PC-3 (cell line): ENCODE measurements at regions of chr6 and their contacts with region 1.

Region 1: GRCh38 chr6:128520436-128521281 is at the start of gene PTPRK:
- DNase-seq: peak; percentile 89
- ATAC-seq: peak; percentile 74
- H3K4me3 ChIP-seq: peak within 1 kb of the TSS; percentile 94
- H3K27ac ChIP-seq: peak within 1 kb of the TSS; percentile 96
- H3K4me1 ChIP-seq: peaks cover 36% of the 10 kb centered on the region
- H3K27me3 ChIP-seq: no peaks in the 10 kb centered on the region
- CTCF ChIP-seq: 0 out of 2 replicates have a peak, but pooled peaks have one; percentile 25
- total RNA-seq, gene PTPRK: 53.8 and 64.7 TPM in 2 replicates

Region 2: GRCh38 chr6:127737009-127737486 is 783.6 kb before region 1 on chr6:
- CTCF ChIA-PET with region 1: no interaction called
- POLR2A ChIA-PET with region 1: no interaction called
- intact Hi-C with region 1: loop called (anchors 2 kb)
- DNase-seq: peak; percentile 71
- ATAC-seq: peak; percentile 87
- H3K4me3 ChIP-seq: no peak overlapping the region
- H3K27ac ChIP-seq: no peak overlapping the region
- H3K4me1 ChIP-seq: no peaks in the 10 kb centered on the region
- H3K27me3 ChIP-seq: peaks cover 14% of the 10 kb centered on the region; the same call in 1 of the 2 replicates
- CTCF ChIP-seq: peak; percentile 75

Region 3: GRCh38 chr6:128368213-128368944 is 152.3 kb before region 1 on chr6:
- CTCF ChIA-PET with region 1: no interaction called
- POLR2A ChIA-PET with region 1: no interaction called
- intact Hi-C with region 1: loop called (anchors 5 kb)
- DNase-seq: peak; percentile 81
- ATAC-seq: peak; percentile 75
- H3K4me3 ChIP-seq: peak overlapping the region; percentile 49
- H3K27ac ChIP-seq: peak overlapping the region; percentile 91
- H3K4me1 ChIP-seq: peaks cover 59% of the 10 kb centered on the region
- H3K27me3 ChIP-seq: no peaks in the 10 kb centered on the region
- CTCF ChIP-seq: no peak

Region 4: DNA sequence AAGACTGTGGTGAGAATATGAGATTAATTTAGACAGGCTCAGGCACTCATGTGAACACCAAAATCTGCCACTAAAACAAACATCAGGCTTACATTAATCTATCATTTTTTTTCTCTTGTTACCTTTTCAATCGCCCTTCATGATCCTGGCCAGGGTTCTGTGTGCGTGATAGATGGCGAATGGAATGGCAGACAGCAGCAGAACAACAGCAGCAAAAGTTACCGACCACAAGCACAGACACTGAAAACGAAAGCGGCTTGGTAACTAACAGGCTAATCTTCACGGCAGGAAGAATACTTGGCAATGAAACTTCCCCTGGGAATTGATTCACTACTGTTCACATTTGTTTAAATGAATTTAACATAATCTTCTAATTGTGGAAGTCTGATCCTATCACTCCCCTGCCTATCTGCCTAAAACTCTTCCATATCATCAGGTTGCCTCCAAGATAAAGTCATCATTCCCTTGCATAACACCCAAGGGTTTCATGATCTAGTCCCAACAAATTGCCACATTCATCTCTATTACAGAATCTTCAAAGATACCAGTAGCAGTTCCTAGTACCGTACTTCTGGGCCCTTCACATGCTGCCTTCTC is 29.0 kb before region 1 on chr6:
- CTCF ChIA-PET with region 1: no interaction called
- POLR2A ChIA-PET with region 1: no interaction called
- intact Hi-C with region 1: loop called (anchors 1 kb)
- DNase-seq: peak; percentile 37
- ATAC-seq: peak; percentile 36
- H3K4me3 ChIP-seq: peak overlapping the region; percentile 64
- H3K27ac ChIP-seq: peak overlapping the region; percentile 94
- H3K4me1 ChIP-seq: peaks cover 47% of the 10 kb centered on the region
- H3K27me3 ChIP-seq: no peaks in the 10 kb centered on the region
- CTCF ChIP-seq: no peak

Region 5: DNA sequence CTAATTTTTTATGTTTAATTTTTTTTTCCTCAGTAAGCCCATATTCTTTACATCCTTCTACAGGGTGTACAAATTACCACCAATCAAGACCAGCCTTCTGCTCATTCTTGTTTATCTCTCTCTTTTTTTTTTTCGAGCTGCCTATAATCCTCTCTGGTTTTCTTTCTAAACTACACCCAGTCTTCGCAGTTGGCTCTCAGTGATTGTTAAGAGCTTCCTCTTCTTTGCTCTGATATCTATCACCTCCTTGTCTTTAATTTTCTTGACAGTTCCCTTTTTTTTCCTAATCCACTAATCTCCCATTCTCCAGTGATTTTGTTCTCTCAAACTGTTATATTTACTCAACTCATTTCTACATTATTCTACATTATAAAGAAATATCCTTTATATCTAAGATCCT is 38.3 kb after region 1 on chr6:
- CTCF ChIA-PET with region 1: no interaction called
- POLR2A ChIA-PET with region 1: no interaction called
- intact Hi-C with region 1: no loop called
- DNase-seq: no peak
- ATAC-seq: no peak
- H3K4me3 ChIP-seq: no peak overlapping the region
- H3K27ac ChIP-seq: no peak overlapping the region
- H3K4me1 ChIP-seq: no peaks in the 10 kb centered on the region
- H3K27me3 ChIP-seq: no peaks in the 10 kb centered on the region
- CTCF ChIP-seq: no peak

Region 6: DNA sequence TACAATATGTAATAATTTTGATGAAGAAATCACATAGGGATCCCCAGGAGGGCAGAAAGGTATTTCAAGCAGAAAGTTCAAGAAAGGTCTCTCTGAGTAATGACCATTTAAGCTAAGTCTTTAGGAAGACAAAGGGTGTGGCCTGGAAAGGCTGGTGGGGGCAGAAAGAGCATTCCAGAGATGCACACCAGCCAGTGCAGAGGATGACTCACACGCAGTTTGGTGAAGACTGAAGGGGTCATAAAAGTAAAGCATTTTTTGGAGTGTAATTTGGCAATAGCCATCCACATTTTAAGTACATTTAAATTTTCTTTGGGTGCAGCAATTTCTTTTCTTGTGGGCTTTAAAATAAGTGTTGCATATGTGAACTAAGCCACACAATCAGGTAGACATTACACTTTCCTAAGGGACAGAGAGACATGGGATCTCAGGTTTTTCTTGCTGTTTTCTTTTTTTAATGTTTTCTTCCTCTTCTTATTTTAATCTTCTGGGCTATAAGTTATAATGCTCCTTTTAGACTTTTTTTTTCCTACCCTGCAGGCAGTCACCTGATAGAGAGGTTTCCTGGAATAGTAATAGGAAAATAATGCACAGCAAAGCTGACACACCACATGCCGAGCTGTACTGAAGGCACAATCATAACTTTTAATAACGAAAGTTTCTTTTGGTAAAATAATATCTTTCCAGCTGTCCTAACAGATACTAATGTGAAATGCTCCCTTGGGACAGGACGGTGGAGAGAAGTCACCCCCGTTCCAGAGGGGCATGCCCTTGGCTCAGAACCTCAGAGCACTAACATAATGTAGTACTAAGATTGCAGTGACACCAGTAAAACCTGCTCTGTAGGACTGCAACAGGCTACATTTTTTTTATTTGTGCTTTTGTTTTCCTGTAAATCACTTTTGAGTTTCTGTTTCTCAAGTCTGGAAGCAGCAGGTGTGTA is 49.3 kb after region 1 on chr6:
- CTCF ChIA-PET with region 1: no interaction called
- POLR2A ChIA-PET with region 1: no interaction called
- intact Hi-C with region 1: loop called (anchors 1 kb)
- DNase-seq: peak; percentile 92
- ATAC-seq: peak; percentile 76
- H3K4me3 ChIP-seq: peak overlapping the region; percentile 62
- H3K27ac ChIP-seq: peak overlapping the region; percentile 93
- H3K4me1 ChIP-seq: peaks cover 62% of the 10 kb centered on the region
- H3K27me3 ChIP-seq: no peaks in the 10 kb centered on the region
- CTCF ChIP-seq: no peak

Region 7: GRCh38 chr6:128655978-128656498 is 135.4 kb after region 1 on chr6:
- CTCF ChIA-PET with region 1: no interaction called
- POLR2A ChIA-PET with region 1: no interaction called
- intact Hi-C with region 1: loop called (anchors 2 kb)
- DNase-seq: peak; percentile 89
- ATAC-seq: peak; percentile 80
- H3K4me3 ChIP-seq: no peak overlapping the region; the same call in 1 of the 2 replicates
- H3K27ac ChIP-seq: peak overlapping the region; percentile 94
- H3K4me1 ChIP-seq: peaks cover 37% of the 10 kb centered on the region
- H3K27me3 ChIP-seq: no peaks in the 10 kb centered on the region
- CTCF ChIP-seq: no peak

Region 8: GRCh38 chr6:128731249-128732165 is 210.8 kb after region 1 on chr6:
- CTCF ChIA-PET with region 1: interaction called, 4 read pairs
- POLR2A ChIA-PET with region 1: no interaction called
- intact Hi-C with region 1: loop called (anchors 2 kb)
- DNase-seq: peak; percentile 65
- ATAC-seq: peak; percentile 74
- H3K4me3 ChIP-seq: no peak overlapping the region
- H3K27ac ChIP-seq: no peak overlapping the region
- H3K4me1 ChIP-seq: no peaks in the 10 kb centered on the region
- H3K27me3 ChIP-seq: no peaks in the 10 kb centered on the region
- CTCF ChIP-seq: peak; percentile 77

Region 9: DNA sequence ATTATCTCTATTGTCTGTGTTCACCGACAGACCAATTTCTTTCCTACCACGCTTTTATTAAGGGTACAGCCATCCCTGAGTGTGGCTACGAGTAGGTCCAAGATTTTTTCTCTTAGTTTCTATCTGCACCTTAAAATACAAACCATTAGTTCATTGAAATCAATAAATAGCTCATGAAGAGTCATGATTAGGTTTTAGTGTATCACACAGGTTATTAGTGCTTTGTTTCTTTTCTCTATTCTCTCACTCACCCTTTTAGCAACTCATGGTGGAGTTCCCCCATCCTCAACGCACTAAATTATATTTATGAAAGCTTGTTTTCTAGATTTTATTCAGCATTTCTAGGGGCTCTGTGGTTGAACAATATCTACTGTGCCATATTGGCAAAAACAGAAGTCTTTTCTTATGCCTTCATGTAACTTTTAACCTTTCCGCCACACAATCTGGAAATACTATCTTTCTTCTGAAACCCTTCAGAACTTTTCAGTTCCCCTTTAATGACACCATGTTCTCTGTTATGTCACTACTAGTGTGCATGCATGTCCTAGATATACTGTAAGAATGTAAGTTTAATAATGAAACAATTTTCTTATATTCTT is 234.1 kb after region 1 on chr6:
- CTCF ChIA-PET with region 1: no interaction called
- POLR2A ChIA-PET with region 1: no interaction called
- intact Hi-C with region 1: no loop called
- DNase-seq: no peak
- ATAC-seq: no peak
- H3K4me3 ChIP-seq: no peak overlapping the region
- H3K27ac ChIP-seq: no peak overlapping the region
- H3K4me1 ChIP-seq: no peaks in the 10 kb centered on the region
- H3K27me3 ChIP-seq: no peaks in the 10 kb centered on the region
- CTCF ChIP-seq: no peak